ENCODE measurements at regions of chr3 and their contacts with region 1.

Region 1: DNA sequence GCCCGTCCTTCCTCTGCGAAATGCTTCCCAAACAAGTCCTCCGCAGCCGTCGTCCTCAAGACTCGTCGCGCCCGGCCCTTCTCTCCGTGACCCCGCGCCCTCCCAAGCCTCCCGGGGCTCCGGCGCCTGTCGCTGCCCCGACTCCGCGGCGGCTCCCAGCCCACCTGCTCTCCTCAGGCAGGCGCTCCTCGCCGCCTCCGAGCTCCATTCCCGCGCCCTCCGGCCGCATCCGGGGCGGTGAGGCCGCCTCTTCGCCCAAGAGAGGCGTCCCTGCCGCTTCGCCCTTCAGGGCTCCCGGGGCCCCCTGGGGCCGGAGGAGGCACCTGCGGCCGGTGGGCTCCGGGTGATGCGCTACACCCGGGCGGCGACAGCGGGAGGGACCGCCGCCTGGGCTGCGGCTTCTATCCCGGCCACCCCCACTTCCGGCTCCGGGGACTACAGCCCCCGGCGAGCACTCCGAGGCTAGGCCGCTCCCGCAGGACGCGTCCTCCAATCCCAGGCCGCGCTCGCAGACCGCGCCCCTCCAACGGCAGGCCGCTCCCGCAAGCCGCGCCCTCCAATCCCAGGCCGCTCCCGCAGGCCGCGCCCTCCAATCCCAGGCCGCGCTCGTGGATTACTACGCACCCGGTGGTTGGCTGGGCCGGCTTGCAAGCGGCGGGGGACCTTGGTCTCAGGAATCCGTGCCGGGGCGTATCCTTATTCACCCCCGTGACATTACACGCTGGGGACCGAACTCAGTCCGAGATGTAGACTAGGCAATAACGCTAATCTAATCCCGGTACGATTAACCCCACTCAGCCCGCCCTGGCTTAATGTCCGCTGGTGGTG is at the start of gene RUBCN:
- DNase-seq: peak; percentile 95
- ATAC-seq: peak; percentile 97
- H3K4me3 Mint-ChIP-seq: peak within 1 kb of the TSS; percentile 89
- H3K27ac Mint-ChIP-seq: peak within 1 kb of the TSS; percentile 98
- H3K4me1 Mint-ChIP-seq: peaks cover 37% of the 10 kb centered on the region
- H3K27me3 Mint-ChIP-seq: no peaks in the 10 kb centered on the region
- total RNA-seq, gene RUBCN: 48.4 to 50.2 TPM

Region 2: DNA sequence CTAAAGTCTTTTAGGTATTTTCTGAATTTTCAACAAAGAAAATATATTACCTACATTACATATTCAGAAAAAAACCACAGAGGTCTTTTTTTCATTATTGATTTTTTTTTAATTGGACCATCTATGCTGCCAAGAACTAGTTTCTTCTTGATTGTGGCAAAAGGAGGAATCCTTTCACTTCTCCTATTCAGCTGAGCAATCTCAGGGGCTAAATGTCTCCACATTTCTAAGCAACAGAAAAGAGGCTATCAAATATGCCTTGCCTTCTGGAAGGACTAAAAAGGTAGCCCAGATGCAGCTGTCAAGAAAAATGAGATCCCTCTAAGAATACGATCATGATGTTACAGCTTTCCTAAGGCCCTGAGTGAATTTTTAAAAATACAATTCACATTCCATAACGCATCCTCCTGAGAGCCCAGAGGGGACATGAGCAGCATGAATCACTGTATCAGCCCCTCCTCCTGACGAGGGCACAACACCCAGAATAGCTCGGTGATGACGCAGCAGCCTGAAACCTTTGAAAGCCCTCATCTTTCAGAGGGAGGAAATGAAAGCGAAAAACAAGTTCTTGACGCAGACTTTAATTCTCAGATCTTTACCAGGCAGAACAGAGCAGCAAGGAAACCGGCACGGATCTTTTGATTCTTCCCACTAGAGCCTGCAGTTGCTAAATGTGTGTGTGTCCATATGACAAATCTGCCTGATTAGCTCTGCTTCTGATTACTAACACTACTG is 24.6 kb before region 1 on chr3:
- CTCF ChIA-PET with region 1: interaction called, 3 read pairs
- POLR2A ChIA-PET with region 1: interaction called, 14 read pairs
- DNase-seq: peak; percentile 92
- ATAC-seq: peak; percentile 100
- H3K4me3 Mint-ChIP-seq: peak overlapping the region; percentile 77
- H3K27ac Mint-ChIP-seq: peak overlapping the region; percentile 98
- H3K4me1 Mint-ChIP-seq: peaks cover 38% of the 10 kb centered on the region
- H3K27me3 Mint-ChIP-seq: no peaks in the 10 kb centered on the region